ENCODE measurements at regions of chr1 and their contacts with region 1.

Region 1: DNA sequence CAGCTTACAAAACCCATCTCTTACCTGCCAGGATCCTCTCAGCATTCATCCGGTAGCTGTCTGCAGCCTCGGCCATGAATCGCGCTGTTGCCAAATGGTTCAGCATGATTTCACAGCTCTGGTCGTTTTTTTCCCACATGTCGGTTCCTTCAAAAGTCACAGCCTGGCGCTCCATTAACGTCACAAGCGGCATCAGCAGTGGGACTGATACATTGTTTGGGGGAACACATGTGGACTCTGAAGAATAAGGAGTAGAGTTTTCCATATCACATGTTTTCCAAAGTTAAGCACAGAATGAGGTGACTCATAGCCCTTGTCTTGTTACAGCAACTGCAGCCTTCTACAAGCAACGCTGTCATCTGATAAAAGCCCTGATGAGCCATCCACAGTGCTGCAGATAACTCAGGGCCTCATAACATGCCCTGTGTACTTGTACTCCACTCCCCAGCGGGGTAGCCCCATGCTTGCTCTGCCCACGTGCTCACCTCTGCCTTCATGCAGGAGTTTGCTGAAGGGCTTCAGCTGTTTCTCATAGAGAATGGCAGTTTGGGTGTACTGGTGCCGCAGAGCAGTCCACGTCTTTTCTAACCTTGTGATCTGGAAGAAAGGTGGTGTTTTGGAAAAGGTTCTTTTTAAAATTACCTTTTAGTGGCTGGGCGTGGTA is 114.2 kb downstream of the BCAR3 start:
- DNase-seq: peak; percentile 80 to 95 (median 85)
- ATAC-seq: peak; percentile 97
- H3K4me3 ChIP-seq: peak overlapping the region; percentile 25
- H3K27ac ChIP-seq: peak overlapping the region; percentile 81
- H3K4me1 ChIP-seq: peaks cover 11 to 17% of the 10 kb centered on the region in 2 experiments
- H3K27me3 ChIP-seq: no peaks in the 10 kb centered on the region
- CTCF ChIP-seq: no peak
- EP300 ChIP-seq: peak; percentile 94
- POLR2A ChIP-seq: peak; percentile 63
- RAD21 ChIP-seq: peak; percentile 35 to 40; a peak in 2 of 4 replicates

Region 2: GRCh38 chr1:93502561-93502960 is 64.8 kb before region 1 on chr1:
- CTCF ChIA-PET with region 1: no interaction called
- POLR2A ChIA-PET with region 1: interaction called, 3 read pairs
- in situ Hi-C with region 1: no loop called
- intact Hi-C with region 1: loop called (anchors 10 kb)
- DNase-seq: no peak
- ATAC-seq: no peak
- H3K4me3 ChIP-seq: no peak overlapping the region
- H3K27ac ChIP-seq: peak overlapping the region; percentile 47
- H3K4me1 ChIP-seq: peaks cover 4 to 54% of the 10 kb centered on the region in 2 experiments; a peak in 4 of 5 replicates
- H3K27me3 ChIP-seq: no peaks in the 10 kb centered on the region
- CTCF ChIP-seq: no peak
- EP300 ChIP-seq: no peak
- POLR2A ChIP-seq: no peak
- RAD21 ChIP-seq: no peak